ENCODE measurements at regions of chr18 and their contacts with region 1.

Region 1: DNA sequence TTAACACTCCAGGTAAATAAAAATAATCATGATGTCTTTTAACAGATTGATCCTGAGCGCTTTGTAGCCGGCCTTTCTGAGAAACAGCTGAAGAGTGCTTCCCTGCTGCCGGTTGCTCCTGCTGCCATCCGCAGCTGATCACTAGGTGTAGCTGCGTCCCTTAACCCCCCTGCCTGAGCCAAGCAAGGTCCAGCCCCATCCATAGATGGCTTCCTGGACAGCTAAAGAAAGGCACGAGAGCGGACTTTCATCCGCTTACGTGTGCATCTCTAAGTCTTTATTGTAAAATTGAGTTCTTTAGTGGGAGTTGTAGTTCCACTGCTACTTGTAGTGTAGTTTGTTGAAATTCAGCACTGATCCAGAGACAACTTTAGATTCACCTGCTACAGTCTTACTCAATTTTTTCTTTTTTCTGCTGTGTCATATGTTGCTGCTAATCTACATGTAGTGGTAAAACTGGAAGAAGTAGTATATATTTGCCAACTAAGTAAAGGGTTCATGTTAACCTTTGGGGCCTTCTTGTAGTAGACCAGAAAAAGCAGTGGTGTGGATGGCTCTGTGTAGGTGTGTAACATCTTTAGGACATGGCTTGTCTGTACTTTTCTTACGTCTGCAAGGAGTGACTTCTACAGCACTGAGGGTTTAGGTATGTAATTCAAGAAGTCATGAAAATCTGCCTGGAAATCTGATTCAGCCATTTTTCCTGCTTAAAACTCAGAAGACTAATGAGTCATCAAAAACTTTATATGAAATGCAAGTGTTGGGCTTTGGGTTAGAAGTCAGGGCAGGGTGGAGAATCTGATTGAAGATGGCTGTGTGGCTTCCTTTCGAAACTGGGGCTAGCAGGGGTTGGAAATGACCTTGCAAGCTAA is 8.3 kb downstream of the PTPRM start:
- DNase-seq: peak; percentile 83
- ATAC-seq: peak; percentile 67
- H3K4me3 ChIP-seq: peak overlapping the region; percentile 37; the same call in 1 of the 2 replicates
- H3K27ac ChIP-seq: peak overlapping the region; percentile 88
- H3K4me1 ChIP-seq: peaks cover 66% of the 10 kb centered on the region
- H3K27me3 ChIP-seq: no peaks in the 10 kb centered on the region
- CTCF ChIP-seq: no peak

Region 2: DNA sequence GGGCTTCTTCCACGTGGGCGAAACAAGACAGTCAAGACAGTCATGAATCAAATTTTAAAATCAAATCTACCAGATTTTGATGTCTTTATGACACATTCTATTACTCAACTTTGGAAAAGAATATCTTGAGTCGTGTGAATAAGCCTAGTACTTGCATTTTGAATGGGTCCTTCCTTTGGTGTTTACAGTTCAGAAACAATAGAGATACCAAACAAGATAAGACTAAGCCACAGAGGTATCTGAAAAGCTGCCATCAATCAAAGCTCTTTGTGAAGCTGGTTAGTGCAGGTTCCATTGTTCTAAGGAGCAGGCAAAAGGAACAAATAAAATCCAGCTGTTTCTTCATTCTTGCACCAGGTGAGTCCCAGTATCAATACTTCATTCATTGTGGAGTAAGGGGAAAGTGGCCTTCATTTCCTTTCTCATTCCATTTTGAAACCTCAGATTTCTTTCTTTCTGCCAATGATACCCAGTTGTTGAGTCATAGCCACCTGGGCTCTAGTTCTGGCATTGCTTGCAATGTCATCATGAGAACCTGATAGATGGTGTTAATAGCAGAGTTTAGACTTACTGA is 1009.0 kb before region 1 on chr18:
- CTCF ChIA-PET with region 1: no interaction called
- POLR2A ChIA-PET with region 1: no interaction called
- intact Hi-C with region 1: no loop called
- DNase-seq: peak; percentile 74
- ATAC-seq: peak; percentile 67
- H3K4me3 ChIP-seq: no peak overlapping the region
- H3K27ac ChIP-seq: peak overlapping the region; percentile 50
- H3K4me1 ChIP-seq: peaks cover 22% of the 10 kb centered on the region
- H3K27me3 ChIP-seq: no peaks in the 10 kb centered on the region
- CTCF ChIP-seq: no peak

Region 3: GRCh38 chr18:7637269-7637668 is 61.9 kb after region 1 on chr18:
- CTCF ChIA-PET with region 1: no interaction called
- POLR2A ChIA-PET with region 1: no interaction called
- intact Hi-C with region 1: loop called (anchors 2 kb)
- DNase-seq: peak; percentile 92
- ATAC-seq: peak; percentile 100
- H3K4me3 ChIP-seq: no peak overlapping the region
- H3K27ac ChIP-seq: peak overlapping the region; percentile 22
- H3K4me1 ChIP-seq: peaks cover 27% of the 10 kb centered on the region
- H3K27me3 ChIP-seq: no peaks in the 10 kb centered on the region
- CTCF ChIP-seq: no peak

Region 4: GRCh38 chr18:8375249-8375648 is 799.9 kb after region 1 on chr18:
- CTCF ChIA-PET with region 1: no interaction called
- POLR2A ChIA-PET with region 1: no interaction called
- intact Hi-C with region 1: loop called (anchors 10 kb)
- DNase-seq: peak; percentile 17
- ATAC-seq: peak; percentile 23
- H3K4me3 ChIP-seq: no peak overlapping the region
- H3K27ac ChIP-seq: no peak overlapping the region
- H3K4me1 ChIP-seq: no peaks in the 10 kb centered on the region
- H3K27me3 ChIP-seq: no peaks in the 10 kb centered on the region
- CTCF ChIP-seq: no peak

Region 5: DNA sequence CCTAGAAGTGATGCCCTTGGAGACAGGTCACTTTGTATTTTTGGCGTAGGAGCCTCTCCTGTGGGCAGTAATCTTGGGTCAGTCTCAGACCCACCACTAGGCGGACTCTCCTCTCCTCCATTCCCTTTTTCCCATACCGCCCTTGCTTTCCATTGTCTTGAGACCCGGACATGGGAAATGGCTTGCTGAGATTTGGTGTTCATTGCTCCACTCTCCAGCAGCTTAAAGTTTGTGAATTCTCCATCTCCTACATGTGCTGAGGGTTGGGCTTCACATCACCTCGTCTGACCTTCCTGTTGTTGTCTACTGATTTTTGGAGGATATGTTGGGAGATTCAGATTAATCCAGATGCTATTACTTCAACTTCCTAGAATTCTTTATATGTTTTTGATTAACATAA is 874.6 kb after region 1 on chr18:
- CTCF ChIA-PET with region 1: no interaction called
- POLR2A ChIA-PET with region 1: interaction called, 19 read pairs
- intact Hi-C with region 1: no loop called
- DNase-seq: peak; percentile 18
- ATAC-seq: no peak
- H3K4me3 ChIP-seq: no peak overlapping the region
- H3K27ac ChIP-seq: no peak overlapping the region
- H3K4me1 ChIP-seq: peaks cover 17% of the 10 kb centered on the region
- H3K27me3 ChIP-seq: no peaks in the 10 kb centered on the region
- CTCF ChIP-seq: peak; percentile 64

Measured in PC-3 (cell line).